Right ventricle myocardium inferior (tissue), 1 donor: ENCODE measurements at regions of chr2 and their contacts with region 1.

Region 1: DNA sequence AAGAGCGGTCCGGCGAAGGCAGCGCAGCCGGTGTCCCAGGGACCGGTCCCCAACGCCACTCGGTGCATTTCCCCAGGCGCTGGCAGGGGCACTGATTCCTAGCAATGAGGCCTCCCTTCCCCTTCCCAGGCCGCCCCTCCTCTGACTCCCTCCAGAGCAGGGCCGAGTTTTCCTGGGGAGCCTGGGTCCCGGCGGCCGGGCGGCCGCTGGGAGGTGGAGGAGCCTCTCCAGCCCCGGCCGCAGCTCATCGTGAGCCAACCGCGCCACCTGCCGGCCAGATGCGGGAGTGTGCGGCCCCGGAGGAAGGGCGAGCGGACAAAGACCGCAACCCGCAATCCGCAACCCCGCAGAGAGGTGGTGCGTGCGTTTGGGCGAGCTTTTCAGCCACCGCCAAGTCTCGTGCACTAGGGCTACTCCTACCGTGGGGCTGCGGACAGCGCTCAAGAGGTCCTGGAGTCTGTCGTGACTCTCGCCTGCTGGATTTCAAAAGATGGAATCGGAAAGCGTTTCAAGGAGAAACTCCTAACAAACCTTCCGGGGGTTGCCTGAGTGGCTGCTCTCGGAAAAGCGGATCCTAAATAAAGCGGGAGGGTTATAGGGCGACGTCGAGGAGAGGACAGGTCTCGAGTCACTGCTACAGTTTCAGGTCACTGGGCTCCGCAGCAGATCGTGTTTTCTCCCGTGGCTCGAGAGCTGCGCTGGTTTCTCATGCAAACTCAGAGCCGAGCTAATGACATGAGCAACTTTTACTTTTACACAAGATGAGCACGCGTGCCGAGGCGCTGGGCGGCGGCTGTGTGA is 1.5 kb upstream of the EPHA4 start:
- DNase-seq: peak; percentile 91
- ATAC-seq: peak; percentile 88

Region 2: GRCh38 chr2:219736209-219736608 is 1837.4 kb before region 1 on chr2:
- intact Hi-C with region 1: loop called (anchors 5 kb)
- DNase-seq: no peak
- ATAC-seq: peak; percentile 53

Region 3: GRCh38 chr2:220687231-220687843 is 886.3 kb before region 1 on chr2:
- intact Hi-C with region 1: loop called (anchors 1 kb)
- DNase-seq: peak; percentile 75
- ATAC-seq: peak; percentile 82

Region 4: GRCh38 chr2:221228214-221228769 is 345.3 kb before region 1 on chr2:
- intact Hi-C with region 1: loop called (anchors 2 kb)
- DNase-seq: no peak
- ATAC-seq: no peak

Region 5: GRCh38 chr2:221410487-221410886 is 163.1 kb before region 1 on chr2:
- intact Hi-C with region 1: no loop called
- DNase-seq: no peak
- ATAC-seq: no peak

Region 6: GRCh38 chr2:221969087-221969829 is 395.6 kb after region 1 on chr2:
- intact Hi-C with region 1: loop called (anchors 10 kb)
- DNase-seq: no peak
- ATAC-seq: no peak